ENCODE measurements at regions of chr22 and their contacts with region 1.

Region 1: DNA sequence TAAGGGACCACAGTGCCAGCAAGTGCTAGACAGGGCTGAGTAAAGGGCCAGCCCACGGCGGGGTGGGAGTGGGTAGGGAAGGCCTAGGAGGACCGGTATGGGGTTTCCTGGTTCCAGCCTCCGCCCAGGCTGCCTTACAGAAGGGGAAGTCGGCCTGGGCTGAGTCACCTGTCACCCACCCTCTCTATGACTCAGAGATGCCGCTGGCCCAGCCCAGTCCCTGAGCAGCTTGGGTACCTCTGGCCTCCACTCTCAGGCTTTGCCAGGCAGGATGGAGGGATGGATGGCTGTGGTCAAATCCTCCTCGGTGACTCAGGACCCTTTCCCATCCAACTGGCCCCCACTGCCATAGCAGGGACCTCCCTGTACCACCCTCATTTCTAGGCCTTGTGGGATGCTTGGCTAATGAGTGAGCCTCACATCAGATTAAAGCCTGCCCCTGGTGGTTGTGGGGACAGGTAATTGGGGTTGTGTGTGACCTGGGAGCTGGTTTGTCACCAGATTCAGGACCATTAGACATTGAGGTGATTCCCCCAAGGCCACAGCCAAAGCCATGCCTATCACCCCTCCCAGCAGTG is 13.9 kb downstream of the SLC35E4 start:
- DNase-seq: peak; percentile 94
- H3K4me3 Mint-ChIP-seq: no peak overlapping the region
- H3K27ac Mint-ChIP-seq: peak overlapping the region; percentile 85
- H3K4me1 Mint-ChIP-seq: peaks cover 31% of the 10 kb centered on the region
- H3K27me3 Mint-ChIP-seq: no peaks in the 10 kb centered on the region

Region 2: DNA sequence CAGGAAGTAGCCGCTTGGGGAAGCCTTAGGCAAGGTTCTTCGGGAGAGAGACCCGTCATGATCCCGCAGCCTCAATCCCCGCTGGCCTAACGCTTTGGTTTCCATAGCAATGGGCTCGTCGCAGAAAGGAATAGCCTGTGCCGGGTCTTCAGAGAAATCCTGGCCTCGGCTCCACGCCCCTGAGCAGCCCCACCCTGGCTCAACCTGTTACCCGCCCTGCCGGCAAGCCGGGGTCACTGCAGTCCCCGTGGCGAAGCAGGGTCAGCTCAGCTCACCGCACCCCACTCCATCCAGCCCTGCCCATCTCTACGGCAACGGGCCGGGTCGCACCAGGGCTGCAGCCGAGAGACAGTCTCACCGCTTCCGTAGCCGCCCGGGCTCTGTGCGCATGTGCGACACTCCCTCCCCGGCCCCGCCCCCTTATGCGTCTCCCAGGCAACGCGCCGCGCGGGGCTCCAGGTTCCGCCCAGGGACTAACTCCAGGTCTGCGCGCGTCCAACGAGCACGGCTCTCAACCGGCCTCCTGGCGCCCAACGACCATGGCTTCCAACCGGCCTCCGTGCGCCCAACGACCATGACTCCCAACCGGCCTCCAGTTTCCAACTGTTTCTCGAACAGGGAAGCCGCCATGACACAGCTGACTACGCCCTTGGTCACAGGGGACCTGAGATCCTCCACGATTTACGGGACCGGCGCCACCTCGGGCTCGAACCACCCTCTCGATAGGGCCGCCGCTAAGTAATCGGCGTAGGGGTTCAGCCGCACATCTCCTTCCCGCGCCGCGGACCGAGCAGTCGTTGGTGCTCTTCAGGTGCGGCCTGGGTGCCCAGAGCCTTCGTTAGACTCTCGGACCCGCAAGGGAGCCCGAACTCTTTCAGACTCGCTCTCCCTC is 18.2 kb after region 1 on chr22 and contains the start of gene DUSP18:
- CTCF ChIA-PET with region 1: interaction called, 14 read pairs
- POLR2A ChIA-PET with region 1: interaction called, 4 read pairs
- intact Hi-C with region 1: loop called (anchors 1 kb)
- DNase-seq: peak; percentile 97
- H3K4me3 Mint-ChIP-seq: peak within 1 kb of the TSS; percentile 96
- H3K27ac Mint-ChIP-seq: peak within 1 kb of the TSS; percentile 62
- H3K4me1 Mint-ChIP-seq: peaks cover 21% of the 10 kb centered on the region
- H3K27me3 Mint-ChIP-seq: peaks cover 3% of the 10 kb centered on the region
- total RNA-seq, gene DUSP18: 9.2 to 10.6 TPM

Region 3: DNA sequence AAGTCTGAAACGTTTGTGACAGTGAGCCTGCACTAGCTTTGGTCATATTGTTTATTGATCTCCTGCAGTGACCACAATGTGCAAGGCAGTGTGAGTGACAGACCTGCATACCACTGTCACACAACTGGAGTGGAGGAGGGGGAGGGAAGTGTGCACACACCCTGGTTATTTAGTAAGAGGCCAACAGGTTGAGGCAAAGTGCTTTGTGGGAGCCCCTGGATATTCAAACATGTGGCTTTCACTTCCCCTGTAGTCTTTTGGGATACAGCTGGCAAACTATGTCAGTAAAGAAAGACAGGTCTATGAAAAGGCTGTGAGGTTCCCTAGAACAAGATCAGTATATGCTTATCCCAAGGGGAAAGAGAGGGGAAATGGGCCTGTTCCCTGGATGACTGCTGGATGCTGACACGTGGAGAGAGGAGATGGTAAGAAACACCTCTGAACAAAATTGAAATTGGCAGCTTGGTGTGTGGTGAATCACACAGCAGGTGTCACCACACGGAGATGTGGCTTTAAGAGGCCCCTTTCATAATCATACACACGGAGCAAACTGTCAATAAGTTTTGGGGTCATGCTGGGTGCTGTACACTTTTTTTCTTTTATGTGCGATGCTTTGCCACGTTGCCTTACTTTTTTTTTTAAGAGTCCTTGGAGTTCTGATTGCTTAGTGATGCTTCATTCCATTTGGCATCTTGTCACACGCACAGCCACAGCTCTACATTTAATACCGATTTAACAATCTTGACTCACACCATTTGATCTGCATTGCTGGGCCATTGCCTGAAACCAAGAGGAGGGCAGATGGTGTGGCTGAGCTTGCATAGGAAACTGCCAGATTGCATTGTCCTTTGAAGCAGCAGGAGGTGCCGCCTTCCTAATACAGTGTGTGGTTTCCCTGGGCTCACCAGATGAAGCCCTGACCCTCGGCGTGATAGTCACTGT is 56.5 kb after region 1 on chr22:
- CTCF ChIA-PET with region 1: no interaction called
- POLR2A ChIA-PET with region 1: no interaction called
- intact Hi-C with region 1: loop called (anchors 5 kb)
- DNase-seq: peak; percentile 56
- H3K4me3 Mint-ChIP-seq: no peak overlapping the region
- H3K27ac Mint-ChIP-seq: peak overlapping the region; percentile 57
- H3K4me1 Mint-ChIP-seq: peaks cover 23% of the 10 kb centered on the region
- H3K27me3 Mint-ChIP-seq: no peaks in the 10 kb centered on the region